ENCODE measurements at regions of chr9 and their contacts with region 1.

Region 1: GRCh38 chr9:68949271-68950000 is 64.5 kb downstream of the PRKACG start:
- DNase-seq: peak; percentile 45
- ATAC-seq: peak; percentile 57
- H3K4me3 ChIP-seq: no peak overlapping the region
- H3K27ac ChIP-seq: peak overlapping the region; percentile 54
- H3K4me1 ChIP-seq: peaks cover 44% of the 10 kb centered on the region
- H3K27me3 ChIP-seq: no peaks in the 10 kb centered on the region; a peak in 1 of 4 replicates
- CTCF ChIP-seq: peak; percentile 14 to 56 (median 49); a peak in 5 of 6 replicates
- EP300 ChIP-seq: no peak
- POLR2A ChIP-seq: no peak
- RAD21 ChIP-seq: peak; percentile 77

Region 2: DNA sequence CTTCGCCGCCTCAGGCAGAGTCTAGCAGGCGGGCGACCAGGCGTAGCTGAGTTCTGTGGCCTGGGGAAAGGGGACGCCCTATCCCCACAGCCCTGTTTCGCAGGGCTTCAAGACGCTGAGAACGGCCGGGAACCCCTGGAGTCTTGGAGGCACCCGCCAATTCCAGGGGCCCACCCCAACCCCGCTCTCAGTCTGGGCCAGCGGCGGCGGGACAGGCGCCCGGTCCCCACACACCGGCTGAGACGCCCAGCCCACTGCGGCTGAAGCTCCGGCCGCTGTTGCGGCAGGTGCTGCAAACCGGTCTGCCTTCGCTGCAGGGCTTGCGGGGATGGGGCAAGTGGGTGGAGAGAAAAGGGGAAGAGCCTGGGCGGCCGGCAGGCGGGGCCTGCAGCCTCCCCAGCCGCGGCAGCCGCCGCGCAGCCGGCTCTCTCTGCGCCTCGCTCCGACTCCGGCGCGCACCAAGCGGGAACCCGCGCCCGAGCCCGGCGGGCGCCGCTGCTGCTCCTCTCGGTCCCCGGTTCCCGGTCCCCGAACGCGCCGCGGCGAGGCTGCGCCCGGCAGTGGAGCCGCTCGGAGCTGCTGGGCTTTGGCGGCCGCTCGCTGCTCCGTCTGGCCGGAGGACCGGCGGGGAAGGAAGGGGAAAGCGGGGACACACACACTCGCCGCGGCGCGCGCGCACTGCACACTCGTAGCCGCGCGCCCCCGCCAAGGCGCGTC is 244.5 kb before region 1 on chr9 and contains the start of gene PIP5K1B:
- CTCF ChIA-PET with region 1: interaction called, 6 read pairs
- POLR2A ChIA-PET with region 1: interaction called, 3 read pairs
- RAD21 ChIA-PET with region 1: interaction called, 7 read pairs
- SMC1A ChIA-PET with region 1: interaction called, 8 read pairs
- in situ Hi-C with region 1: no loop called
- intact Hi-C with region 1: loop called (anchors 2 kb)
- DNase-seq: no peak
- ATAC-seq: peak; percentile 87
- H3K4me3 ChIP-seq: peak within 1 kb of the TSS; percentile 98
- H3K27ac ChIP-seq: peak within 1 kb of the TSS; percentile 72
- H3K4me1 ChIP-seq: peaks cover 28% of the 10 kb centered on the region
- H3K27me3 ChIP-seq: peaks cover 3 to 5% of the 10 kb centered on the region in 2 experiments
- CTCF ChIP-seq: 0 out of 6 replicates have a peak, but pooled peaks of 2 of the 3 experiments have one; percentile 2
- EP300 ChIP-seq: no peak
- POLR2A ChIP-seq: peak; percentile 59
- RAD21 ChIP-seq: no peak
- polyA plus RNA-seq, gene PIP5K1B: 6.8 to 10.9 TPM

Region 3: DNA sequence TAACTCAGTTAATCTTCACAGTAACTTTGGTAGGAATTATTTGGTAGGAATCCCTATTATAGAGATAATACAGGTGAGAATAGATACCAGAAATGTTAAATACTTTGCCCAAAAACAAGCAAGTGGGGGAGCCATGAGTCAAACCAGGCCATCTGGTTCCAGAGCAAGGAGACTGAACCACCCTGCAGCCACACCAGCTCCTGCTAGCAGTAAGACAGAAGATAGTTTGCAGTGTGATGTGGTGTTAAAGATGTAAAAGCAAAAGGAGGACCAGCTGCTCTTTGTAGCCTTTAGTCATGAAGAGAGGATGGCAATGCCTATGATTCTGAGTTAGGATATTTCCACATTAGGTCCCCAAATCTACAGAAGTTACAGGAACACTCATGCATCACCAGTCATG is 36.9 kb before region 1 on chr9:
- CTCF ChIA-PET with region 1: interaction called, 11 read pairs
- POLR2A ChIA-PET with region 1: no interaction called
- RAD21 ChIA-PET with region 1: no interaction called
- SMC1A ChIA-PET with region 1: interaction called, 3 read pairs
- in situ Hi-C with region 1: no loop called
- intact Hi-C with region 1: no loop called
- DNase-seq: no peak
- ATAC-seq: no peak
- H3K4me3 ChIP-seq: no peak overlapping the region
- H3K27ac ChIP-seq: no peak overlapping the region
- H3K4me1 ChIP-seq: peaks cover 14% of the 10 kb centered on the region
- H3K27me3 ChIP-seq: no peaks in the 10 kb centered on the region
- CTCF ChIP-seq: no peak
- EP300 ChIP-seq: no peak
- POLR2A ChIP-seq: no peak
- RAD21 ChIP-seq: no peak

Region 4: GRCh38 chr9:68974431-68974830 is 25.0 kb after region 1 on chr9:
- CTCF ChIA-PET with region 1: interaction called, 23 read pairs
- POLR2A ChIA-PET with region 1: interaction called, 6 read pairs
- RAD21 ChIA-PET with region 1: interaction called, 19 read pairs
- SMC1A ChIA-PET with region 1: interaction called, 33 read pairs
- in situ Hi-C with region 1: no loop called
- intact Hi-C with region 1: no loop called
- DNase-seq: peak; percentile 84
- ATAC-seq: peak; percentile 92
- H3K4me3 ChIP-seq: peak overlapping the region; percentile 28; the same call in 1 of the 2 replicates
- H3K27ac ChIP-seq: peak overlapping the region; percentile 66
- H3K4me1 ChIP-seq: peaks cover 36% of the 10 kb centered on the region
- H3K27me3 ChIP-seq: no peaks in the 10 kb centered on the region
- CTCF ChIP-seq: no peak
- EP300 ChIP-seq: peak; percentile 69 to 76; a peak in 2 of 4 replicates
- POLR2A ChIP-seq: no peak
- RAD21 ChIP-seq: no peak